H1 (cell line): ENCODE measurements at regions of chr15 and their contacts with region 1.

Region 1: GRCh38 chr15:50116473-50116872 is 2.6 kb downstream of the ATP8B4 start:
- DNase-seq: peak; percentile 13 to 56
- H3K4me3 ChIP-seq: no peak overlapping the region
- H3K27ac ChIP-seq: no peak overlapping the region
- H3K4me1 ChIP-seq: no peaks in the 10 kb centered on the region; a peak in 1 of 7 replicates
- H3K27me3 ChIP-seq: no peaks in the 10 kb centered on the region
- CTCF ChIP-seq: peak; percentile 16 to 79 (median 41)
- EP300 ChIP-seq: no peak
- POLR2A ChIP-seq: no peak
- RAD21 ChIP-seq: peak; percentile 42 to 57

Region 2: GRCh38 chr15:49823987-49824538 is 292.4 kb before region 1 on chr15:
- CTCF ChIA-PET with region 1: no interaction called
- POLR2A ChIA-PET with region 1: no interaction called
- DNase-seq: no peak
- H3K4me3 ChIP-seq: no peak overlapping the region
- H3K27ac ChIP-seq: no peak overlapping the region
- H3K4me1 ChIP-seq: no peaks in the 10 kb centered on the region
- H3K27me3 ChIP-seq: no peaks in the 10 kb centered on the region
- CTCF ChIP-seq: no peak
- EP300 ChIP-seq: no peak
- POLR2A ChIP-seq: no peak
- RAD21 ChIP-seq: no peak

Region 3: DNA sequence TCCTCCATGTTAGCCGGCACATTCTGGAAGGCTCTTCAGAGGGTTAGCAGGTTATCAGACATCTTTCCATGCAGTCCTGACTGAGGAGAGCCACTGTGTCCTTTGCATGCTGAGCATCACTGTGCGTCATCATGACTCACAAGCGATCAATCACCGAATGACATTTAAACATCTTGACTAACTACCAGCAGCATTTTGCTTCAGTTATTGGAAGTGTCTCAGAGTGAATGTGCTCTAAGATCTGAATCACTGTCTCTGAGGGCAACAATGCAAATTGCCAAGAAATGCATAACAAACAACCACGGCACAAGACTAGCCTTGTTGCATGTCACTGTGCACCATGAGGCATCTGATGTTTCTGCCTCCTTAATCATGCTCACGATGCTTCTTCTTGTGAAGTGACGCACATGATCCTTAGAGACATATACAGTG is 20.9 kb after region 1 on chr15:
- CTCF ChIA-PET with region 1: interaction called, 12 read pairs
- POLR2A ChIA-PET with region 1: no interaction called
- DNase-seq: no peak
- H3K4me3 ChIP-seq: no peak overlapping the region
- H3K27ac ChIP-seq: no peak overlapping the region
- H3K4me1 ChIP-seq: peaks cover 0 to 3% (median 0%) of the 10 kb centered on the region in 4 experiments; a peak in 1 of 7 replicates
- H3K27me3 ChIP-seq: no peaks in the 10 kb centered on the region
- CTCF ChIP-seq: no peak
- EP300 ChIP-seq: no peak
- POLR2A ChIP-seq: no peak
- RAD21 ChIP-seq: no peak